ENCODE measurements at regions of chr15 and their contacts with region 1.

Region 1: DNA sequence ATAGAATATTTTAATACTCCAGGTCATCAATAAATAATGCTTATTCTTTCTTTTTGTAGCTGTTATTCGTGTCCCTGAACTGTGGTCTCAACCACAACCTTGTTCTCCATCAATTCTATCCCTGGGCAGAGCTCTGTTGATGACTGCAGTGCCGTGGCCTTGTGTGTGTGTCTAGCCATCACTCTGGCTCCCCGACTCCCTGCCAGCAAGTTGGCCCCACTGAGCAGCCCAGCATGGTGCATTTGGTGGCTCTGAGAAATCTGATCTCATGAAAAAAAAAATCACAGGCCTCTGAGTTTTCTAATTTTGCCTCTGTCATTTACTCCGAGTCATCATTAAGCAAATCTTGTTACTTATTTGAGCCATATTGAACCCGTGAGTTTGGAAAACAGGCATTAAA is 164.7 kb downstream of the GOLGA6L6 start:
- DNase-seq: no peak
- H3K4me3 ChIP-seq: no peak overlapping the region
- H3K27ac ChIP-seq: no peak overlapping the region
- H3K4me1 ChIP-seq: no peaks in the 10 kb centered on the region
- H3K27me3 ChIP-seq: no peaks in the 10 kb centered on the region
- CTCF ChIP-seq: no peak

Region 2: DNA sequence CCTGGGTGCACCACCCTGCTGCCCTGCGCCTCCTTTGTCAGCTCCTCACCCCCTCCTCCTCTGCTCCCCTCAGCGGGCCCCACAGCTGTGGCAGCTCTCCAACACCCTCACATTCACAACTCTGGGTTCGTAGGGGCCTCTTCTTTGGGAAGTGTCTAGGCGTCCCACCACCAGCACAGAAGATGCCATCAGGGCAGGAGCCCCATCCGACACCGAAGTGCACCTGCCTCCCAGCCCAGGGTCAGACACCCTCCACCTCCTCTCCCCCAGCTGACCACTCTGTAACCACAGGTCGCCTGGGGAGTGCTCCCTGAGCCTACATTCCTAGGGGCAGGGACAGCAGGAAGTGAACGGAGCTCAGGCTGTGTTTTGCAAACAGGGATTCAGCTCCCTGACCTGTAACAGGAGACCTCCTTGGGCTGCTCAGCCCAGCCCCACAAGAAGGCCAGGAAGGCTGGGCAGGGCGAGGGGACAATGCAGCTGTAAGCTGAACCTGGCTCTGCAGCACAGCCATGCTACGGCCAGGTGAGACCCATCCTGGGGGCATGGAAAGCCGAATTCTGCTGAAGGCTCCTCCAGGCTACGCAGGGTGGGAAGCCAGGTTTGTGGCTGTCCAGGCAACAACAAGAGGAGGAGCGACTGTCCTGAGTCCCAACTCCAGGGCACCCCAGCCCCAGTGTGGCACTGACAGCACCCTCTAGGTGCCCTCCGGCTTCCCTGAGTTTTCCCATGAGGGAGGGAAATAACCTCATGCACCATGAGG is 104.3 kb before region 1 on chr15:
- CTCF ChIA-PET with region 1: no interaction called
- dilution Hi-C with region 1: no loop called
- in situ Hi-C with region 1: loop called in 1 of 2 experiments (anchors 10 kb)
- intact Hi-C with region 1: no loop called
- DNase-seq: no peak
- H3K4me3 ChIP-seq: no peak overlapping the region
- H3K27ac ChIP-seq: no peak overlapping the region
- H3K4me1 ChIP-seq: no peaks in the 10 kb centered on the region
- H3K27me3 ChIP-seq: no peaks in the 10 kb centered on the region
- CTCF ChIP-seq: no peak